Activated CD4-positive, alpha-beta T cell treated with anti-CD3 and anti-CD28 coated beads for 36 hours (primary cell): ENCODE measurements at regions of chr2 and their contacts with region 1.

Region 1: DNA sequence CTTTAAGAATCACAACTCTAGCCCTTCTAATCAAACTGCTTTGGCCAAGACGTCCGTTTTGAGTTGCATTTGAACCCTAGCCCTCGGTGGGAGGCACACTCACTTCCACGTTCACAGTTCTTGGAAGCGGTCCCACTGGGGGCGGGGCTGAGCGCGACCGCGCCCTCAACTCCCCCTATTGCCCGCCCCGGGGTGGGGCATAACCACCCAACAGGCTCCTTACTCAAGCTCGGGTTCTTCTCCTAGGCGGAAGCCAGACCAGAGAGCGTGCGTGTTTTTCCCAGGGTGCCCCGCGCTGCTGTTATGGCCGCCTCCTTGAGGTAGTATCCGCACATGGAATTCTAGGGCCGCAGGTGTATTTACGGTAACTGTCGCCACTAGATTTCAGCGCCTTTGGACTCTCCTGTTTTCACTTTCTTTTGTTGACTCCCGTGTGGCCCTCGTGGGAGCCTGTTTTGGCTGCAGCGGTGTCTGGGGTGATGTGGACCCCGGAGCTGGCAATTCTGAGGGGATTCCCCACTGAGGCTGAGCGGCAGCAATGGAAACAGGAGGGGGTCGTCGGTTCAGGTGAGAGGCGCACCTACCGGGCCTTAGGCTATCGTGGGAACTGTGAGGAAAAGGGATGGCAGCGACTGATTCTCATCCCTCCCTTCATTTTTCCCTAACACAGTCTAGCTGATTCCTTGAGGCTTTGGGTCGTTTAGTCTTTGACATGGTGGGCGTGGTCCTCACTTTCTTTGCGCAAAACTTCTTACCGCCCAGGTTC is at the start of gene TTC27:
- DNase-seq: peak; percentile 97
- ATAC-seq: peak; percentile 99
- H3K4me3 Mint-ChIP-seq: peak within 1 kb of the TSS; percentile 92
- H3K27ac Mint-ChIP-seq: peak within 1 kb of the TSS; percentile 93
- H3K4me1 Mint-ChIP-seq: peaks cover 34% of the 10 kb centered on the region
- H3K27me3 Mint-ChIP-seq: no peaks in the 10 kb centered on the region
- total RNA-seq, gene TTC27: 32.7 to 33.7 TPM

Region 2: DNA sequence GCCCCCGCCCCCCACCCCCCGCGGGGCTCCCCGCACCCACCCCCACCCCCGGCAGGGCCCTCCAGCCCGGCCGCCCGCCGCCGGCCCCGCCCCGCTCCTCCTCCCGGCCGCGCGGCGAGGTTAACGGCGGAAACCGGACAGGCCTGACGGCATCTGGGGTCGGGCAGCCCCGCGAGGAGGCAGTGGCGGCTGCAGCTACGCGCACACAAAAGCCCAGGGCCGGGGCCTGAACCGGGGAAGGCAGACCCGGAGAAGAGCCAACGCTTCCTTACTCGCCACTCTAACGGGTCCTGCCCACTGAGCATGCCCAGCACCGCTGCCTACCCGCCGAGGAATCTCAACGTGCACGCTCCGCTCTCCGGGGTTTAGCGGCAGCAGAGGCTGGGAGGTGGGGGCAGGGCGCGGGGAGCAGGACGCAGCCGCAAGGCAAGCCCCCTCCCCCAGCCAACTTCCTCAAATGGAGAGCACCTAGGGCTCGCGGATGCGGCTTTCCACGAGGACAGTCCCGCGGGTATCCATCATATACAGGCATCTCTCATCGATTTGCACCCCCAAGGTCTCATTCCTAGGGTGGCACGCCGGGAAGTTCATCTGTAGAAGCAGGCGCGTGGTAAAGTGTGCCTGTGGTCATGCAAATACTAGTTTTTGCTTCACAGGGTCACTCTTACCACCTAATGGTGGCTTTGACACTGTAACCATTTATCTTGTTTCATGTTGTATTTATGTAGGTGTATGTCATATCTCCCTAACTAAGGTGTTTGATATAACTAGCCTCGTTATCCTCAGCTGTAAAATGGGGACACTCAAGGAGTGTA is 617.1 kb before region 1 on chr2 and contains the start of gene MEMO1:
- CTCF ChIA-PET with region 1: no interaction called
- POLR2A ChIA-PET with region 1: no interaction called
- intact Hi-C with region 1: loop called in 1 of 2 experiments (anchors 5 kb)
- DNase-seq: peak; percentile 97
- ATAC-seq: peak; percentile 82
- H3K4me3 Mint-ChIP-seq: peak within 1 kb of the TSS; percentile 94
- H3K27ac Mint-ChIP-seq: peak within 1 kb of the TSS; percentile 98
- H3K4me1 Mint-ChIP-seq: peaks cover 32% of the 10 kb centered on the region
- H3K27me3 Mint-ChIP-seq: no peaks in the 10 kb centered on the region
- total RNA-seq, gene MEMO1: 49.8 to 53.5 TPM

Region 3: GRCh38 chr2:32168513-32168912 is 459.5 kb before region 1 on chr2:
- CTCF ChIA-PET with region 1: no interaction called
- POLR2A ChIA-PET with region 1: no interaction called
- intact Hi-C with region 1: loop called in 1 of 2 experiments (anchors 1 kb)
- DNase-seq: no peak
- ATAC-seq: no peak
- H3K4me3 Mint-ChIP-seq: no peak overlapping the region
- H3K27ac Mint-ChIP-seq: peak overlapping the region; percentile 38
- H3K4me1 Mint-ChIP-seq: peaks cover 39% of the 10 kb centered on the region
- H3K27me3 Mint-ChIP-seq: no peaks in the 10 kb centered on the region

Region 4: GRCh38 chr2:32342801-32343200 is 285.2 kb before region 1 on chr2:
- CTCF ChIA-PET with region 1: no interaction called
- POLR2A ChIA-PET with region 1: no interaction called
- intact Hi-C with region 1: no loop called
- DNase-seq: no peak
- ATAC-seq: no peak
- H3K4me3 Mint-ChIP-seq: no peak overlapping the region
- H3K27ac Mint-ChIP-seq: no peak overlapping the region
- H3K4me1 Mint-ChIP-seq: no peaks in the 10 kb centered on the region
- H3K27me3 Mint-ChIP-seq: no peaks in the 10 kb centered on the region

Region 5: DNA sequence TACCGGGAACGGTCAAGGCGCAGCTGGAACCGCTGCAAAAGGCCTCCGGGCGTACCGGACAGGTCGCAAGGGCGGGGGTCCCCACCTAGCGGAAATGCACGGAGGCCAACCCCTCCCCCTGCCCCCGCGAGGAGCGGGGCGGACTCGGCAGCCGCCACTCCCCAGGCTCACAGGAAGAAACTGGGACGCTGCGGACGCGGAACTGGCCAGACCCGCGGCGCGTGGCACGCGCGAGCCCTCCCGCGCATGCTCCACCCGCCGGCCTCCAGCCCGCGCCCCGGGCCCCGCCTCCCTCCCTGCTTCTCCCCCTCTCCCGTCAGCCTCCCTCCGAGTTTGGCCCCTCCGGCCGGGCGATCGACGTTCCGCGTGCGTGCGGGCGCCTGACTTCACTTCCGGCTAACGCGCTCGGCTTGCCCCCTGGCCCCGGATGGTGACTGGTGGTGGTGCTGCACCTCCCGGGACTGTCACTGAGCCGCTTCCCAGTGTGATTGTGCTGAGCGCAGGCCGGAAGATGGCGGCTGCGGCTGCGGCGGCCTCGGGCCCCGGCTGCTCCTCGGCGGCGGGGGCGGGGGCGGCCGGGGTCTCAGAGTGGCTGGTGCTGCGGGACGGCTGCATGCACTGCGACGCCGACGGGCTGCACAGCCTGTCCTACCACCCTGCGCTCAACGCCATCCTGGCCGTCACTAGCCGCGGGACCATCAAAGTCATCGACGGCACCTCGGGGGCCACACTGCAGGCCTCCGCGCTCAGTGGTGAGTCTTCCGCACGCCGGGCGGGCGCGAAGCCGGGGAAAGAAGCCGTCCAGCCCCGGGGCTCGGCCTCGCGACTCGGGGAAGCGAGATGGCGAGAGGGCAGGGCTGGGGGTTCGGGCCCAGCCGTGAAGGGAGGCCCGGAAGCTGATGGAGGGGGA is 271.0 kb before region 1 on chr2 and contains the start of gene BIRC6:
- CTCF ChIA-PET with region 1: no interaction called
- POLR2A ChIA-PET with region 1: no interaction called
- intact Hi-C with region 1: loop called (anchors 2 to 5 kb)
- DNase-seq: peak; percentile 98
- ATAC-seq: peak; percentile 94
- H3K4me3 Mint-ChIP-seq: peak within 1 kb of the TSS; percentile 78
- H3K27ac Mint-ChIP-seq: peak within 1 kb of the TSS; percentile 93
- H3K4me1 Mint-ChIP-seq: peaks cover 37% of the 10 kb centered on the region
- H3K27me3 Mint-ChIP-seq: no peaks in the 10 kb centered on the region
- total RNA-seq, gene BIRC6: 66.1 to 70.1 TPM

Region 6: GRCh38 chr2:32464431-32464830 is 163.6 kb before region 1 on chr2:
- CTCF ChIA-PET with region 1: no interaction called
- POLR2A ChIA-PET with region 1: no interaction called
- intact Hi-C with region 1: no loop called
- DNase-seq: no peak
- ATAC-seq: no peak
- H3K4me3 Mint-ChIP-seq: no peak overlapping the region
- H3K27ac Mint-ChIP-seq: no peak overlapping the region
- H3K4me1 Mint-ChIP-seq: peaks cover 2% of the 10 kb centered on the region
- H3K27me3 Mint-ChIP-seq: no peaks in the 10 kb centered on the region

Region 7: GRCh38 chr2:32591669-32592463 is 36.1 kb before region 1 on chr2:
- CTCF ChIA-PET with region 1: no interaction called
- POLR2A ChIA-PET with region 1: no interaction called
- intact Hi-C with region 1: loop called in 1 of 2 experiments (anchors 2 kb)
- DNase-seq: no peak
- ATAC-seq: peak; percentile 97
- H3K4me3 Mint-ChIP-seq: no peak overlapping the region
- H3K27ac Mint-ChIP-seq: peak overlapping the region; percentile 82
- H3K4me1 Mint-ChIP-seq: peaks cover 29% of the 10 kb centered on the region
- H3K27me3 Mint-ChIP-seq: no peaks in the 10 kb centered on the region

Region 8: GRCh38 chr2:32752205-32752604 is 124.2 kb after region 1 on chr2:
- CTCF ChIA-PET with region 1: no interaction called
- POLR2A ChIA-PET with region 1: no interaction called
- intact Hi-C with region 1: no loop called
- DNase-seq: no peak
- ATAC-seq: no peak
- H3K4me3 Mint-ChIP-seq: no peak overlapping the region
- H3K27ac Mint-ChIP-seq: no peak overlapping the region
- H3K4me1 Mint-ChIP-seq: peaks cover 15% of the 10 kb centered on the region
- H3K27me3 Mint-ChIP-seq: no peaks in the 10 kb centered on the region

Region 9: GRCh38 chr2:33069894-33070651 is 442.1 kb after region 1 on chr2:
- CTCF ChIA-PET with region 1: no interaction called
- POLR2A ChIA-PET with region 1: no interaction called
- intact Hi-C with region 1: loop called in 1 of 2 experiments (anchors 2 kb)
- DNase-seq: peak; percentile 76
- ATAC-seq: peak; percentile 98
- H3K4me3 Mint-ChIP-seq: no peak overlapping the region
- H3K27ac Mint-ChIP-seq: no peak overlapping the region
- H3K4me1 Mint-ChIP-seq: peaks cover 9% of the 10 kb centered on the region
- H3K27me3 Mint-ChIP-seq: peaks cover 15% of the 10 kb centered on the region